ENCODE measurements at regions of chr4 and their contacts with region 1.

Region 1: GRCh38 chr4:152352622-152353116 is 183.2 kb downstream of the FBXW7 start:
- DNase-seq: peak; percentile 26 to 64 (median 58)
- ATAC-seq: peak; percentile 100
- H3K4me3 ChIP-seq: peak overlapping the region; percentile 88
- H3K27ac ChIP-seq: peak overlapping the region; percentile 94
- H3K4me1 ChIP-seq: no peaks in the 10 kb centered on the region
- H3K27me3 ChIP-seq: no peaks in the 10 kb centered on the region

Region 2: GRCh38 chr4:151771664-151772063 is 581.0 kb before region 1 on chr4:
- intact Hi-C with region 1: loop called in 1 of 4 experiments (anchors 10 kb)
- DNase-seq: no peak
- ATAC-seq: no peak
- H3K4me3 ChIP-seq: no peak overlapping the region
- H3K27ac ChIP-seq: no peak overlapping the region
- H3K4me1 ChIP-seq: no peaks in the 10 kb centered on the region
- H3K27me3 ChIP-seq: no peaks in the 10 kb centered on the region